ENCODE measurements at regions of chr12 and their contacts with region 1.

Region 1: DNA sequence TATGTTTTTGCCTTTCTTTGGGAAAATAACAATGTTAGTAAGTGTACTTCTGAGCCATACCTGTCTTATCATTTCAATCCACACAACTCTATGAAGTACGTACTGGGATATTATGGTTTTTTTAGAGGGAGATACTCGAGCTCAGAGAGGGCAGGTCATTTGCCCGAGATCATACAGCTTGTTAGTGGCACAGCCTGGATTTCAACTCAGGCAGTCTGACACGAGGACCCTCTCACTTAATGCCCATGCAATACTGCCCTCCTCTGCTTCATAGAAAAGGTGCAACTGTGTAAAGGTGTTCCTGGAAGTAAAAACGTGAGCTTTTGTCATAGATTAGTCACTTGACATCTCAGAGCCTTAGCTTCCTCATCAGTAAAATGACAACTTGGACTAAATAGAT is 128.0 kb downstream of the NDUFA12 start:
- DNase-seq: peak; percentile 21 to 59
- H3K4me3 ChIP-seq: no peak overlapping the region
- H3K27ac ChIP-seq: no peak overlapping the region
- H3K4me1 ChIP-seq: no peaks in the 10 kb centered on the region
- H3K27me3 ChIP-seq: peaks cover 5% of the 10 kb centered on the region
- CTCF ChIP-seq: peak; percentile 53; the same call in 1 of the 2 replicates

Region 2: DNA sequence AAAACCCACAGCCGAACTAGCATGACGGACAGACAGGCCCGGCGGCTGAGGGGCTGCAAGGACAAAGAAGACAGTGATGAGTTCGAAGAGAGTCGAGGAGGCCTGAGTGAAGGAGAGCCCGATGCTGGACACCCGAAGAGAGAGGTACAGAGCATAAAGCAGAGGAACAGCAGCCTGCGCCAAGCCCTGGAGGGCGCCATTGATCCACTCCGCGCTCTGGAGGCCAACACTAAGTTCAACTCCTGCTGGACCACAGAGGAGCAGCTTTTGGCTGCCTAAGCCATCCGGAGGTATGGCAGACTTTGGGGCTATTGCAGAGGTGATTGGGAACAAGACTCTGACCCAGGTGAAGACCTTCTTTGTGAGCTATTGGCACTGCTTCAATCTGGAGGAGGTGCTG is 735.0 kb before region 1 on chr12:
- CTCF ChIA-PET with region 1: no interaction called
- POLR2A ChIA-PET with region 1: no interaction called
- intact Hi-C with region 1: loop called (anchors 5 kb)
- DNase-seq: peak in 1 of 2 experiments; percentile 20
- H3K4me3 ChIP-seq: no peak overlapping the region
- H3K27ac ChIP-seq: no peak overlapping the region
- H3K4me1 ChIP-seq: no peaks in the 10 kb centered on the region
- H3K27me3 ChIP-seq: peaks cover 3% of the 10 kb centered on the region
- CTCF ChIP-seq: no peak

Region 3: GRCh38 chr12:94545935-94546771 is 329.4 kb before region 1 on chr12:
- CTCF ChIA-PET with region 1: interaction called, 3 read pairs
- POLR2A ChIA-PET with region 1: no interaction called
- intact Hi-C with region 1: loop called (anchors 1 kb)
- DNase-seq: peak; percentile 56
- H3K4me3 ChIP-seq: no peak overlapping the region
- H3K27ac ChIP-seq: no peak overlapping the region
- H3K4me1 ChIP-seq: peaks cover 5% of the 10 kb centered on the region; the same call in 1 of the 2 replicates
- H3K27me3 ChIP-seq: no peaks in the 10 kb centered on the region
- CTCF ChIP-seq: peak; percentile 73

Region 4: DNA sequence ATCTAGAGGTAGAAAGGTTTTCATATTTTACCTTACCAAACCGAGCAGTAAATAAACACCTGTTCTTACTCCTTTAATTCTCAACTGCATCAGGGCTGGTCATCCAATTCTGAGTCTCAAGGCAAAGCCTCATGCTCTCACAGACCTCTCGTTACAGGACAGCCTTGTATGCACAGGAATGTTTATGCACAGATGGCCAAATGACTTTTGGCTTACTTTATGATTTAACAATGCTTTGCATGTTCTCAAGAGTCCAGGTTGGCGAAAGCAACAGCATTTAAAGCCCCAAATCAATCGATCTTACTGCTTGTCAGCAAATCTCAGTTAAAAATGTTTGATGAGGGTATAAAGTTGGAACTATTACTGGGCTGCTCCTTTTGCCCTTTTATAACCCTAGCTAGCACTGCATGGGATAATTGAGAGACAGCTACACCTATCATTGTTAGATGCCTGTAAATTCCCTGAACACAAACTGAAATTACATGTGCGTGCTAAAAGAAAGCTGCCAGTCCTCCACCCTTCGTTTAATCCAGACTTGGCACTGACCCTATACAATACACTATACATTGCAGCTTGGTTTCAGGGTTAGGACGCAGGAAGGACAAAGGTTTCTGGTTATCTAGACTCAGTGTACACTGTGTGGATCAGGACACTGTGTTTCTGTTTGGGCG is 288.8 kb before region 1 on chr12:
- CTCF ChIA-PET with region 1: no interaction called
- POLR2A ChIA-PET with region 1: interaction called, 19 read pairs
- intact Hi-C with region 1: no loop called
- DNase-seq: peak in 1 of 2 experiments; percentile 52
- H3K4me3 ChIP-seq: no peak overlapping the region
- H3K27ac ChIP-seq: peak overlapping the region; percentile 10; the same call in 1 of the 2 replicates
- H3K4me1 ChIP-seq: peaks cover 35% of the 10 kb centered on the region
- H3K27me3 ChIP-seq: no peaks in the 10 kb centered on the region
- CTCF ChIP-seq: no peak

Region 5: DNA sequence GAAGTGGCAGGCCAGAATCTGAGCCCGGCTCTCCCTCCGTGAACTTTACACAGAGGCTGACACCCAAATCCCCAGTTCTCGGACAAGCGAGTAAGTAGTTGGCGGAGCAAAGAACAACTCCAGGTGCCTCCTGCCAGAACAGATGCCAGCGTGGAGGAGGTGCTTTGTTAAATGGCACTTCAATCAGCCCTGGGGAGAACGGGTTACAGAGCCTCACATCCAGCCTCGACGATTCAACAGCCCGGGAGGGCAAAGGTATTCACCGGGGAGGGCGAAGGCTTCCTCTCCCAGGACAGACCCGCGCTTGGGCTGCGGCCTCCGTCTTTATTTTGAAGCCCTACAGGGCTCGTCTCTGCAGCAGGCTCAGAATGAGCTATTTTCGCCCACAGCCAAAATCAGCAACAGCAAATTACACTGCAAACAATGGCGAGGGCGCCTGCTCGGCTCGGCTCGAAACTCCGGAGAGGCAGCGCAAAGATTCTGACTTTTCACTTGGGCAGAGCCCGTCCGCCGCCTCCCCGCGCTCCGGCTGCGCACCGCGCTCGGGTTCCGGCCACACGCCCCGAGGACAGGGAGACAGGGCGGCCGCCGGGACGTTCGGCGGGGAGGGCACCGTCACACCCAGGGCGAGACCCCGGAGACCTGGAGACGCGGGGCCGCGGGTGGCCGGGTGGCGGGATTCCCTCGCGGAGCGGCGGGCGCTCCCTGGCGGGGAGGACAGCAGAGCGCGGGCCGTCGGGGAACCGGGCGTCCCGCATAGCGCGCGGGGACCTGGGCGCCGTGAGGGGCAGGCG is 226.0 kb before region 1 on chr12:
- CTCF ChIA-PET with region 1: no interaction called
- POLR2A ChIA-PET with region 1: no interaction called
- intact Hi-C with region 1: loop called (anchors 1 kb)
- DNase-seq: peak in 1 of 2 experiments; percentile 54
- H3K4me3 ChIP-seq: peak overlapping the region; percentile 91
- H3K27ac ChIP-seq: peak overlapping the region; percentile 69
- H3K4me1 ChIP-seq: peaks cover 41% of the 10 kb centered on the region
- H3K27me3 ChIP-seq: no peaks in the 10 kb centered on the region
- CTCF ChIP-seq: no peak; the same call in 1 of the 2 replicates

Region 6: GRCh38 chr12:94839347-94839746 is 36.2 kb before region 1 on chr12:
- CTCF ChIA-PET with region 1: no interaction called
- POLR2A ChIA-PET with region 1: no interaction called
- intact Hi-C with region 1: no loop called
- DNase-seq: no peak
- H3K4me3 ChIP-seq: no peak overlapping the region
- H3K27ac ChIP-seq: no peak overlapping the region
- H3K4me1 ChIP-seq: no peaks in the 10 kb centered on the region
- H3K27me3 ChIP-seq: no peaks in the 10 kb centered on the region
- CTCF ChIP-seq: no peak

Region 7: DNA sequence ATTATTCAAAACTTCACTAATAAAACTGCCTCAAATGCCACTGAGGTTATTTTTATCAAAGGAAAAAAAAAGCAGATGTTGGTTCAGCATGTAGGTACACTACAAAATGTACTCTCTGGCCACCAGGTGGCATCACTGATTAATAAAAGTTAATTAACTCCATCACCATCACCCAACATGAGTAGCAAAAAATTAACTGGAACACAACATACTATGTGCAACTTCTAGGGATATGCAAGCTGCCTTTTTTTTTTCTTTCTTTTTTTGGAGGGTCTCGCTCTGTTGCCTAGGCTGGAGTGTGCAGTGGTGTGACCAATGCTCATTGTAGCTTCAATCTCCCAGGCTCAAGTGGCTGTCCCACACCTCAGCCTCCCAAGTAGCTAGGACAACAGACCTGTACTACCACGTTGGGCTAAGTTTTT is 241.7 kb after region 1 on chr12:
- CTCF ChIA-PET with region 1: no interaction called
- POLR2A ChIA-PET with region 1: no interaction called
- intact Hi-C with region 1: no loop called
- DNase-seq: peak in 1 of 2 experiments; percentile 48
- H3K4me3 ChIP-seq: peak overlapping the region; percentile 43; the same call in 1 of the 2 replicates
- H3K27ac ChIP-seq: peak overlapping the region; percentile 92
- H3K4me1 ChIP-seq: peaks cover 43% of the 10 kb centered on the region
- H3K27me3 ChIP-seq: no peaks in the 10 kb centered on the region
- CTCF ChIP-seq: peak; percentile 94

Region 8: DNA sequence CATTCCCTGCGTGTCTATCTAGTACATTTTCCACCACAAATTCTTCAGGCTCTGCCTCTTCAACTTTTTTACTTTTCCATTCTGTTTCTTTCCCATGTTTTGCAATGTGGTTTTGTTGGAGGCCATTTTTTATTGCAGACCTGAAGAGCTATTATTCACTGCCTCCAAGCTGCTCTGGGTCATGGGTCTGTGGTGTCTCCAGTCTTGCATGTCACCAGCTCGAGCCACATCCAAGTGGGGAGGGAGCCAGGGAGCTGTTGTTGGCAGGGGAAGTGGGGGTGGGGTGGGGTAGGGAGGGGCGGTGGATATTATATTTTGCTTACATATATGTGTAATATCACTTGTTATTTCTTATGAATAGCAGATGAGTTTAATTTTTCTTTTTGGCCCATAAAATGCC is 411.2 kb after region 1 on chr12:
- CTCF ChIA-PET with region 1: no interaction called
- POLR2A ChIA-PET with region 1: no interaction called
- intact Hi-C with region 1: no loop called
- DNase-seq: no peak
- H3K4me3 ChIP-seq: no peak overlapping the region
- H3K27ac ChIP-seq: no peak overlapping the region
- H3K4me1 ChIP-seq: no peaks in the 10 kb centered on the region
- H3K27me3 ChIP-seq: no peaks in the 10 kb centered on the region
- CTCF ChIP-seq: no peak

Measured in PC-9 (cell line).